Transverse colon (tissue), 4 donors: ENCODE measurements at regions of chr7 and their contacts with region 1.

Region 1: GRCh38 chr7:100556541-100556940 is 17.2 kb downstream of the SAP25 start:
- DNase-seq: no peak
- H3K4me3 ChIP-seq: no peak overlapping the region
- H3K27ac ChIP-seq: no peak overlapping the region
- H3K4me1 ChIP-seq: peaks cover 0 to 25% (median 7%) of the 10 kb centered on the region in 4 donors
- H3K27me3 ChIP-seq: no peaks in the 10 kb centered on the region
- CTCF ChIP-seq: no peak
- EP300 ChIP-seq: no peak
- POLR2A ChIP-seq: no peak

Region 2: DNA sequence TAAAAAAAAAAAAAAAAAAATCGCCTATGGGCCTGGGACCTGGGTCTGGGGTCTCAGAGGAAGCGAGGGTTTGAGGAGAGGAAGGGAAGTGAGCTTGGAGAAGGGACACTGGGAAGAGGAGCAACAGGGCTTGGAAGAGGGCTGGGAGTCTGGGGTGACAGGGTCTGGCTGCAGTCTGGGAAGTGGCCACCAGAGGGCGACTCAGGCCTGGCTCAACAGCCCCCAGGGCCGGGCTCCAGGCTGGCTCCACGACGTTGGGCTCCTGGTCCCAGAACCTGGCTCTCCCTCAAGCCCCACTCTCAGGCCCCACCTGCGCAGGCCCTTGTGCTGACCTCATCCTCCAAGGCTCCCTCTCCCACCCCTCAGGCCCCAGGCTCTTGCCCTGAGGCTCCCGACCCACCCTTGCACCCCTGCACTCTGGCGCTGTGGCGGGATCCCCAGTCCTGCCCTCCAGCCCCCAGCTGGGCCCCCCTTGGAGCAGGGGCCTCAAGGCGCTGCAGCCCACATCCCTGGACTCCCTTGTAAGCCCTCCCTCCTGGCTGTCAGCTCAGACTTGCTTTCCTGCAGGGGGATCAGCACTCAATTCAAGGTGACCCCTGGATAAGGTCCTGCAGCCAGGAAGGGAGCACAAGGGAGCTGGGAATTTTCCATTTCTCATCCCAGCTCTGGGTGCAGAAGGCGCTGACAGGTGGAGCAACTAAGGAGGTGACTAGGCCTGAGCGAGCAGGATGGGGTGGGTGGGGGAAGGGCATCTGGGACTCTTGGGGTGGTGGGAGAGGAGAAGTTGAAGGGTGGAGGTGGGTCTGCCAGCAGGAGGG is 87.1 kb before region 1 on chr7:
- in situ Hi-C with region 1: loop called in 2 of 4 experiments (anchors 5 kb)
- intact Hi-C with region 1: loop called (anchors 5 kb)
- DNase-seq: peak; percentile 91
- H3K4me3 ChIP-seq: no peak overlapping the region
- H3K27ac ChIP-seq: peak overlapping the region in 3 of 4 donors; percentile 34 to 62 (median 49)
- H3K4me1 ChIP-seq: peaks cover 19 to 49% (median 28%) of the 10 kb centered on the region in 4 donors
- H3K27me3 ChIP-seq: no peaks in the 10 kb centered on the region
- CTCF ChIP-seq: peak; percentile 94 to 98 (median 95)
- EP300 ChIP-seq: no peak
- POLR2A ChIP-seq: no peak

Region 3: GRCh38 chr7:100478966-100479665 is 77.4 kb before region 1 on chr7 and contains the start of gene TSC22D4:
- in situ Hi-C with region 1: loop called (anchors 5 to 10 kb)
- intact Hi-C with region 1: loop called (anchors 5 kb)
- DNase-seq: peak; percentile 96
- H3K4me3 ChIP-seq: peak within 1 kb of the TSS; percentile 97 to 99 (median 98)
- H3K27ac ChIP-seq: peak within 1 kb of the TSS; percentile 97 to 98 (median 98)
- H3K4me1 ChIP-seq: peaks cover 36 to 57% (median 45%) of the 10 kb centered on the region in 4 donors
- H3K27me3 ChIP-seq: no peaks in the 10 kb centered on the region
- CTCF ChIP-seq: no peak
- EP300 ChIP-seq: no peak
- POLR2A ChIP-seq: peak; percentile 94
- total RNA-seq, gene TSC22D4: 41.6 to 101 (median 67.6) TPM

Region 4: DNA sequence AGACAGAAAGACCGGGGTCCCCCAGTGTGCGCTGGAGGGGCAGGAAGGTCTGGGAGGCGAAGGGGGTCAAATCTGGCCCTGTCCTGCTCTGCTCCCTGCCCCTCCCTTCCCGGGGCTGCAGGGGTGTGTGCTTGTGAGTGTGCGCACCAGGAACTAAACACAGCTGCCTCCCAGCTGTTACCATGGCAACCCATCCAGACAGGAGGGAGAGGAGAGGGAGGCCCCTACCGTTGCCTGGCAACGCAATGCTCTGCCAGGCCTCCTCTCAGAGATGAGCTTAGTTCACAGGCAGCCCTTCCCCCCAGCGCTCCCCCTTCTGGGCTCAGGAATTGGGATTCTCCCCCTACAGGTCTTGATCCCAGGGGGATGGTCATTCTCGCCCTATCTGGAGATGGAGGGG is 66.7 kb before region 1 on chr7:
- in situ Hi-C with region 1: loop called in 1 of 4 experiments (anchors 10 kb)
- intact Hi-C with region 1: loop called (anchors 2 kb)
- DNase-seq: no peak
- H3K4me3 ChIP-seq: no peak overlapping the region
- H3K27ac ChIP-seq: no peak overlapping the region
- H3K4me1 ChIP-seq: peaks cover 8 to 13% (median 11%) of the 10 kb centered on the region in 4 donors
- H3K27me3 ChIP-seq: peaks cover 16% of the 10 kb centered on the region
- CTCF ChIP-seq: no peak
- EP300 ChIP-seq: no peak
- POLR2A ChIP-seq: no peak

Region 5: DNA sequence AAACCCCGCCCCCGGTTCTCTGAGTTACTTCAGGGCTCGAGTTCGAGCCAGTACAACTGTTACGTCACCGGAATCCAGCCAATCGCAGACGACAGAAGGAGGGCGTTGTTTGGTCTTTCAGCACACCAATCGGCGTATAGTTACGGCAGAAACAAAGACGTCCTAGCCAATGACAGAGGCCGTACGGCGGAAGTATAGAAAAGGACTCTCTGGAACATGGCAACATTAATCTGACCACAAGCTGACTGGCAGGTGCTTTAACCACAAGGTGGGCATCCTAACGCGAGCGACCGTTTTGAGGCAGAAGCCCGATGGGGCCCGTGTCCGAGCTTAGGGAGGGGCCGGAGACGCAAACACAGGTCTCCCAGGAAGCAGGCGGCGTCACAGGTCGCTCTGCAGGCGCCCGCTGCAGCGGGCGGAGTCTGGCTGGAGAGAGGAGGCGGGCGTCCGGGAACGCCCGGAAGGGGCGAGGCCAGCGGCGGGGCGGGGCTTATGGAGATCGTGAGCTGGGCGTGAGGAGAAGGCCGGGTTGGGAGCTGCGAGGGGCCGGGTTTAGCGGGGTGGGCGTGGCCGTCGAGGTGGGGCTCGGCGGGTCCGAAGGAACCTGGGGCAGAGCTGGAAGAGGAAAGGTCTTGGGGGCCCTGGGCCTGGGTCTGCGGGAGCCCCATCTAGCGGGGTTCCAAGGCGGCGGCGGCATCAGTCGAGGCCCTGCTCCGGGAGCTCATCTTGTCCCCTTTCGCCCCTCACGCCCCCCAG is 55.6 kb after region 1 on chr7 and contains the start of gene MOSPD3:
- in situ Hi-C with region 1: no loop called
- intact Hi-C with region 1: loop called (anchors 2 kb)
- DNase-seq: peak; percentile 99
- H3K4me3 ChIP-seq: peak within 1 kb of the TSS; percentile 51 to 89 (median 70)
- H3K27ac ChIP-seq: peak within 1 kb of the TSS; percentile 89 to 99 (median 92)
- H3K4me1 ChIP-seq: peaks cover 4 to 20% (median 8%) of the 10 kb centered on the region in 4 donors
- H3K27me3 ChIP-seq: no peaks in the 10 kb centered on the region
- CTCF ChIP-seq: peak in 2 of 5 experiments; percentile 44 to 46
- EP300 ChIP-seq: peak; percentile 15
- POLR2A ChIP-seq: peak; percentile 98
- total RNA-seq, gene MOSPD3: 13.5 to 39.6 (median 18.4) TPM

Region 6: GRCh38 chr7:100933735-100934134 is 377.2 kb after region 1 on chr7:
- in situ Hi-C with region 1: no loop called
- intact Hi-C with region 1: no loop called
- DNase-seq: no peak
- H3K4me3 ChIP-seq: no peak overlapping the region
- H3K27ac ChIP-seq: no peak overlapping the region
- H3K4me1 ChIP-seq: no peaks in the 10 kb centered on the region
- H3K27me3 ChIP-seq: peaks cover 32% of the 10 kb centered on the region
- CTCF ChIP-seq: no peak
- EP300 ChIP-seq: no peak
- POLR2A ChIP-seq: no peak